Caco-2 (cell line): ENCODE measurements at regions of chr7 and their contacts with region 1.

Region 1: GRCh38 chr7:85829817-85830432 is 643.1 kb upstream of the SEMA3D start:
- DNase-seq: peak in 1 of 2 experiments; percentile 25
- H3K4me3 ChIP-seq: no peak overlapping the region
- H3K4me3 Mint-ChIP-seq: no peak overlapping the region
- H3K27ac Mint-ChIP-seq: no peak overlapping the region
- H3K4me1 ChIP-seq: no peaks in the 10 kb centered on the region
- H3K4me1 Mint-ChIP-seq: peaks cover 7% of the 10 kb centered on the region
- H3K27me3 ChIP-seq: no peaks in the 10 kb centered on the region; the same call in 1 of the 2 replicates
- H3K27me3 Mint-ChIP-seq: no peaks in the 10 kb centered on the region
- CTCF ChIP-seq: peak; percentile 30 to 48

Region 2: GRCh38 chr7:85030893-85031292 is 799.0 kb before region 1 on chr7:
- CTCF ChIA-PET with region 1: interaction called, 5 read pairs
- POLR2A ChIA-PET with region 1: no interaction called
- intact Hi-C with region 1: loop called (anchors 1 kb)
- DNase-seq: peak in 1 of 2 experiments; percentile 26
- H3K4me3 ChIP-seq: no peak overlapping the region
- H3K4me3 Mint-ChIP-seq: no peak overlapping the region
- H3K27ac Mint-ChIP-seq: no peak overlapping the region
- H3K4me1 ChIP-seq: peaks cover 7% of the 10 kb centered on the region; the same call in 1 of the 2 replicates
- H3K4me1 Mint-ChIP-seq: no peaks in the 10 kb centered on the region
- H3K27me3 ChIP-seq: no peaks in the 10 kb centered on the region
- H3K27me3 Mint-ChIP-seq: peaks cover 4% of the 10 kb centered on the region
- CTCF ChIP-seq: peak; percentile 29 to 65

Region 3: GRCh38 chr7:85454904-85455303 is 375.0 kb before region 1 on chr7:
- CTCF ChIA-PET with region 1: no interaction called
- POLR2A ChIA-PET with region 1: no interaction called
- intact Hi-C with region 1: loop called (anchors 5 kb)
- DNase-seq: no peak
- H3K4me3 ChIP-seq: no peak overlapping the region
- H3K4me3 Mint-ChIP-seq: no peak overlapping the region
- H3K27ac Mint-ChIP-seq: no peak overlapping the region
- H3K4me1 ChIP-seq: no peaks in the 10 kb centered on the region
- H3K4me1 Mint-ChIP-seq: no peaks in the 10 kb centered on the region
- H3K27me3 ChIP-seq: no peaks in the 10 kb centered on the region
- H3K27me3 Mint-ChIP-seq: no peaks in the 10 kb centered on the region
- CTCF ChIP-seq: no peak

Region 4: GRCh38 chr7:85928500-85928899 is 98.6 kb after region 1 on chr7:
- CTCF ChIA-PET with region 1: no interaction called
- POLR2A ChIA-PET with region 1: no interaction called
- intact Hi-C with region 1: no loop called
- DNase-seq: no peak
- H3K4me3 ChIP-seq: no peak overlapping the region
- H3K4me3 Mint-ChIP-seq: no peak overlapping the region
- H3K27ac Mint-ChIP-seq: no peak overlapping the region
- H3K4me1 ChIP-seq: no peaks in the 10 kb centered on the region
- H3K4me1 Mint-ChIP-seq: peaks cover 6% of the 10 kb centered on the region
- H3K27me3 ChIP-seq: no peaks in the 10 kb centered on the region
- H3K27me3 Mint-ChIP-seq: no peaks in the 10 kb centered on the region
- CTCF ChIP-seq: no peak